SK-N-SH (cell line): ENCODE measurements at regions of chr10 and their contacts with region 1.

Region 1: GRCh38 chr10:97072851-97073665 is 112.7 kb downstream of the SLIT1 start:
- DNase-seq: peak; percentile 87
- H3K4me3 ChIP-seq: no peak overlapping the region
- H3K27ac ChIP-seq: no peak overlapping the region
- H3K4me1 ChIP-seq: peaks cover 0 to 30% of the 10 kb centered on the region in 2 experiments; a peak in 1 of 4 replicates
- H3K27me3 ChIP-seq: peaks cover 17% of the 10 kb centered on the region
- CTCF ChIP-seq: peak; percentile 89
- EP300 ChIP-seq: no peak
- RAD21 ChIP-seq: peak; percentile 98

Region 2: GRCh38 chr10:97025613-97026242 is 47.3 kb before region 1 on chr10:
- CTCF ChIA-PET with region 1: interaction called, 15 read pairs
- POLR2A ChIA-PET with region 1: no interaction called
- DNase-seq: peak; percentile 70
- H3K4me3 ChIP-seq: no peak overlapping the region
- H3K27ac ChIP-seq: no peak overlapping the region
- H3K4me1 ChIP-seq: peaks cover 0 to 16% of the 10 kb centered on the region in 2 experiments; a peak in 1 of 4 replicates
- H3K27me3 ChIP-seq: no peaks in the 10 kb centered on the region
- CTCF ChIP-seq: peak; percentile 66
- EP300 ChIP-seq: no peak
- RAD21 ChIP-seq: peak; percentile 64

Region 3: DNA sequence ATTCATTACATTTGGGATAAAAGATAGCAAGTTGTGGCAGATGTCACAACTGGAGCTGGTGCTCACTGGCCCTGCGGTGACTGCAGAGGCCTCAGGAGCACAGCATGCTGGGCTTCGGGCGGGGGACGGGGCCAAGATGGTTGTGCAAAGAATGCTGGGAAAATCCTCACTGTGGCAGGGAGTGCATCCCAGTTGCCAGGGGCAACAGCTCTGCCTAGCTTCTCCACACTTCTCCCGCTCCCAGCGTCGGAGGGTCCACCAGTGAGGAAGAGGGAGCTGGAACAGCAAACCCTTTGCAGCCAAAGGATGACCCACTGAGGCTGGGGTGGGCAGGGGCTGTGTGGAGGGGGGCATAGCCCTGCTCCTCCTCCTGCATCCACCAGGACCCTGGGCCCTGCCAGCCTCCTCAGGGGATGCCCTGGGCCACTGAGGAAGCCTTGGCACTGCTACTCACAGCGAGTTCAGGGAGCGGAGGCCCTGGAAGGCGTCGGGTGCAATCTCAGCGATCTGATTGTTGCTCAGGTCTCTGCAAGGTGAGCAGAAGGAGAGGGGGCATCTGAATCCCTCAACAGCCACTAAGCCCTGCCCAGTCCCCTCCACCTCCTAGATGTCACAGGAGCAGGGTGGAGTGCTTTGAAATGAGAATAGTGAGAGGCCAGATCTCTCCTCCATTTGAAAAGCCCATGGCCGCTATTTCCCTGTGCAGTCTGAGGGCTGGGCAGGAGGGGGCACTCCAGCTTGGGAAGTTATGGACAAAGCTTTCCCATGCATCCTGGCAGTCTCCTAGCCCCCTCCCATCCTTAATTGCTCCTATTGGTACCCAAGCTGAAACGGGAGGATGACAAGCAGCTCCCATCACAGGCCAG is 13.8 kb before region 1 on chr10:
- CTCF ChIA-PET with region 1: interaction called, 102 read pairs
- POLR2A ChIA-PET with region 1: no interaction called
- DNase-seq: peak; percentile 54
- H3K4me3 ChIP-seq: no peak overlapping the region
- H3K27ac ChIP-seq: no peak overlapping the region
- H3K4me1 ChIP-seq: peaks cover 0 to 5% of the 10 kb centered on the region in 2 experiments; a peak in 1 of 4 replicates
- H3K27me3 ChIP-seq: no peaks in the 10 kb centered on the region; the same call in 1 of the 2 replicates
- CTCF ChIP-seq: no peak
- EP300 ChIP-seq: no peak
- RAD21 ChIP-seq: 0 out of 2 replicates have a peak, but pooled peaks have one; percentile 10

Region 4: GRCh38 chr10:97107551-97107950 is 34.5 kb after region 1 on chr10:
- CTCF ChIA-PET with region 1: interaction called, 16 read pairs
- POLR2A ChIA-PET with region 1: no interaction called
- DNase-seq: no peak
- H3K4me3 ChIP-seq: no peak overlapping the region
- H3K27ac ChIP-seq: no peak overlapping the region
- H3K4me1 ChIP-seq: peaks cover 0 to 7% of the 10 kb centered on the region in 2 experiments; a peak in 1 of 4 replicates
- H3K27me3 ChIP-seq: peaks cover 19% of the 10 kb centered on the region
- CTCF ChIP-seq: no peak
- EP300 ChIP-seq: no peak
- RAD21 ChIP-seq: no peak

Region 5: DNA sequence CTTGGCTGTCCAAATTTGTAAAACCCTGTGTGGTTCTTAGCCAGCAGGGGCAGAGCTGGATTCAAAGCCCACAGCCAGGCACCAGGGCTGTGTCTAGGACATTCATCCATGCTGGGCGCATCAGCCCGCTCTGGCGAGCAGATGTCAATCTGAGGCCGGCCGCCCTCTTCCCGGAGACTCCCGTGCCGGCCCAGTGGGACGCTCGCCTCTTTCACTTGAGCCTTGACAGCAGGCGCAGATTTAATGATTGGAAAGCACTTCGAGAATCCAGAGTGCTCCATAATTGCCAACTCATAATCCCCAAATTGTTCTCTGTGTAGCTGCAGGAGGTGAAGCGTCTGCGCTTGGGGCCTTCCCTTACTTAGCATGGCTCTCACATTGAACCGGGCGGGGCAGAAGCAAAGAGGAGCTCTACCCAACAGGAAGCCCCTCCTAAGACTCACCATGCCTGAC is 76.0 kb after region 1 on chr10:
- CTCF ChIA-PET with region 1: interaction called, 50 read pairs
- POLR2A ChIA-PET with region 1: no interaction called
- DNase-seq: no peak
- H3K4me3 ChIP-seq: no peak overlapping the region
- H3K27ac ChIP-seq: no peak overlapping the region
- H3K4me1 ChIP-seq: peaks cover 0 to 31% of the 10 kb centered on the region in 2 experiments; a peak in 2 of 4 replicates
- H3K27me3 ChIP-seq: no peaks in the 10 kb centered on the region
- CTCF ChIP-seq: no peak
- EP300 ChIP-seq: no peak
- RAD21 ChIP-seq: no peak

Region 6: DNA sequence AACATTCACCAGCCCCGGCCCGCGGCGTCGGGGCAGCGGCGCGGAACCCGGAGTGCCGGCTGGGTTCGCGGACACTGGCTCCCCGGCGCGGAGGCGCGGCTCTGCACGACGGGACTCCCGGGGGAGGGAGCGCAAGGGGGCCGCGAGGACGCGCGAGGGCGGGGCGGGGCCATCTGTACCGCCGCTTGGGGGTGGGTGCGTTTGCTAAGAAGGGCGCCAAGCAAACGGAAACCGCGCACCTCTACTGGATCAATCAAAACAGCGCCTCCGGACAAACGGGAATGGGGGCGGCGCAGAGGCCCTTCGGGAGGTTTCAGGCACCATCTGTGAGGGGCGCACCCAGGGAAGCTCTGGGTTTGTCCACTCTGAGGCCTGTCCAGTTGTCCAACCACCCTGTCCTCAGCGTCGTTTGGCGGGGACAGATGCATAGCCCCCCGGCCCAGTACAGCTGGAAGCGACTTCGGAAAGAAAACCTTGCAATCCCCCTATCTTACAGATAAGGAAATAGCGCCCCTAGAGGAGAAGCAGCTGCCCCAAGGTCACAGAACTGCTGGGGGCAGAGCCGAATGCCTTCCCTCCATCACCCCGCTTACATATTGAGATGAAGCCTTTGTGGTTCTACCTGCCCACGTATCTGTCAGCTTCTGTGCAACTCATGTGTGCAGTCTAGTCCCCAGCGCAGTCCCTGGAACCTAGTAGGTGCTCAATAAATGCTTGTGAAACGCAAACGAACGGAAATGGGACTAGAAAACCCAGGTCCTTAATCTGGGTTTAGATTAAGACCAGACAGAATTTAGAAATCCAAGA is 123.4 kb after region 1 on chr10:
- CTCF ChIA-PET with region 1: interaction called, 894 read pairs
- POLR2A ChIA-PET with region 1: interaction called, 4 read pairs
- DNase-seq: peak; percentile 90
- H3K4me3 ChIP-seq: peak overlapping the region; percentile 51 to 64
- H3K27ac ChIP-seq: no peak overlapping the region
- H3K4me1 ChIP-seq: peaks cover 0 to 5% of the 10 kb centered on the region in 2 experiments; a peak in 1 of 4 replicates
- H3K27me3 ChIP-seq: peaks cover 10% of the 10 kb centered on the region
- CTCF ChIP-seq: peak; percentile 79
- EP300 ChIP-seq: no peak
- RAD21 ChIP-seq: peak; percentile 64